Transverse colon (tissue), 4 donors: ENCODE measurements at regions of chr17 and their contacts with region 1.

Region 1: GRCh38 chr17:4607773-4608187 is 23.5 kb downstream of the SMTNL2 start:
- DNase-seq: peak; percentile 54
- H3K4me3 ChIP-seq: no peak overlapping the region
- H3K27ac ChIP-seq: peak overlapping the region; percentile 28 to 53 (median 46)
- H3K4me1 ChIP-seq: peaks cover 0 to 10% (median 5%) of the 10 kb centered on the region in 4 donors
- H3K27me3 ChIP-seq: no peaks in the 10 kb centered on the region
- CTCF ChIP-seq: no peak
- EP300 ChIP-seq: no peak
- POLR2A ChIP-seq: no peak

Region 2: GRCh38 chr17:4444782-4445473 is 162.9 kb before region 1 on chr17:
- in situ Hi-C with region 1: loop called in 1 of 4 experiments (anchors 25 kb)
- intact Hi-C with region 1: no loop called
- DNase-seq: peak; percentile 83
- H3K4me3 ChIP-seq: no peak overlapping the region
- H3K27ac ChIP-seq: no peak overlapping the region
- H3K4me1 ChIP-seq: peaks cover 0 to 11% (median 7%) of the 10 kb centered on the region in 4 donors
- H3K27me3 ChIP-seq: no peaks in the 10 kb centered on the region
- CTCF ChIP-seq: no peak
- EP300 ChIP-seq: no peak
- POLR2A ChIP-seq: no peak